CD4-positive, alpha-beta T cell (primary cell): ENCODE measurements at regions of chr12 and their contacts with region 1.

Region 1: GRCh38 chr12:100234598-100235304 is 32.1 kb downstream of the DEPDC4 start:
- DNase-seq: peak in 4 of 14 experiments; percentile 18 to 53 (median 38)
- ATAC-seq: no peak
- H3K4me3 ChIP-seq: no peak overlapping the region
- H3K4me3 Mint-ChIP-seq: no peak overlapping the region
- H3K27ac ChIP-seq: no peak overlapping the region
- H3K27ac Mint-ChIP-seq: no peak overlapping the region
- H3K4me1 ChIP-seq: no peaks in the 10 kb centered on the region
- H3K4me1 Mint-ChIP-seq: no peaks in the 10 kb centered on the region
- H3K27me3 ChIP-seq: no peaks in the 10 kb centered on the region
- H3K27me3 Mint-ChIP-seq: no peaks in the 10 kb centered on the region
- CTCF ChIP-seq: peak; percentile 81

Region 2: DNA sequence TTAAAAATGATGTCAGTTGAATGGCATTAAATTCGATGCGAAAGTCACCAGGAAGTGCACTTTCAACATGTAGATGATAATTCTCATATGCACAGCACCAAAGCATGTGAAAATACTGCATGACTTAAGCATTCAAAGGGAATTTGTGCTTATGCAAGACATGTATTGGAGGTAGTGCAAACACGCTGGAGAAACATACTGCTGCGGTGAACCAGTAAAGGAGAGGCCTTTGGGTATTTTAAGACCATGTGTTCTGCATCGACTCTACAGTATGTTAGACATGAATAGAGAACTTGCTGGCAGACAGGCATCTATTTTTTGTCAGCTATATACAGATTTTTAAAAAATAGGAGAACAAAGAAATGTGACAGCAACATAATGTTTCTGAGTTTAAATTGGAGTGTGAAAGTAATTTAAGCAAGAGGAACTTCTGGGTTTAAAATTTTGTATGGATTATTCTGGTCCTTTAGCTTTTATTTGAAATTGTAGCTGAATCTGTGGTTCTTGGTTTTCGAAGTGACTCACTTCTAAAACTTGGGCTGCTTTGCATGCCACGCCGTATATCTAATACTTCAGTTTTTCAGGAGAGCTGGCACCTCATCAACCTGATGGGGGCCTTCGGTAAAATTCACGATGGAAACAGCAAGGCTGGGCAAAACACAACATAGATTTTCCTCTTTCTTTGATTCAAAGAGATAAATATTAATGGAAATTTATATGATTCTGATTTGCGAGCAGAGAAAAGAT is 1181.0 kb before region 1 on chr12:
- CTCF ChIA-PET with region 1: no interaction called
- POLR2A ChIA-PET with region 1: no interaction called
- intact Hi-C with region 1: no loop called
- DNase-seq: no peak
- ATAC-seq: no peak
- H3K4me3 ChIP-seq: no peak overlapping the region
- H3K4me3 Mint-ChIP-seq: no peak overlapping the region
- H3K27ac ChIP-seq: no peak overlapping the region
- H3K27ac Mint-ChIP-seq: no peak overlapping the region
- H3K4me1 ChIP-seq: no peaks in the 10 kb centered on the region
- H3K4me1 Mint-ChIP-seq: no peaks in the 10 kb centered on the region
- H3K27me3 ChIP-seq: peaks cover 0 to 3% of the 10 kb centered on the region in 2 experiments
- H3K27me3 Mint-ChIP-seq: no peaks in the 10 kb centered on the region
- CTCF ChIP-seq: no peak

Region 3: DNA sequence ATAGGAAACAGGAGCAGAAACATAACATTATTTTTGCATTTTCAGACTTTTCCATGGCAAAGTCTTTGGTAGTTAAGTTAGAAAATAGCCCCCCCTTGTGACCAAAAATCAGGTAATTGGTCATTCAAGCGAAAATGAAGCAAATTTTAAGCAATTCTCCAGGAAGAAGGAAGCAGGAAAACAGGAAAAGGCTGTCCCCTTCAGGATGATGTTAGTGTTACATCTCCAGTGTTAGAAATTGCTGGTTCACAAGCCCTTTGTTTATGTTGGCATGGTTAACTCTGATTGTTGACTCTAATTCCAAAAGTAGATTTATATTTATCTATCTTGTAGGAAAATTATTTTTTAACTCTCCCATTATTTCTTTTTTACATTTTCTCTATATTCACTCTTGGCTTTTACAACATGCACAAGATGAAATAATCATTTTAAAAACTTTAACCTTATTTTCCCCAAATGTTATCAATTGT is 319.9 kb after region 1 on chr12:
- CTCF ChIA-PET with region 1: no interaction called
- POLR2A ChIA-PET with region 1: interaction called, 3 read pairs
- intact Hi-C with region 1: loop called in 1 of 2 experiments (anchors 2 kb)
- DNase-seq: peak in 3 of 14 experiments; percentile 24 to 45 (median 39)
- ATAC-seq: no peak
- H3K4me3 ChIP-seq: no peak overlapping the region
- H3K4me3 Mint-ChIP-seq: no peak overlapping the region
- H3K27ac ChIP-seq: no peak overlapping the region
- H3K27ac Mint-ChIP-seq: no peak overlapping the region
- H3K4me1 ChIP-seq: no peaks in the 10 kb centered on the region
- H3K4me1 Mint-ChIP-seq: no peaks in the 10 kb centered on the region
- H3K27me3 ChIP-seq: no peaks in the 10 kb centered on the region
- H3K27me3 Mint-ChIP-seq: peaks cover 20% of the 10 kb centered on the region
- CTCF ChIP-seq: peak; percentile 53

Region 4: GRCh38 chr12:100672075-100672592 is 437.4 kb after region 1 on chr12:
- CTCF ChIA-PET with region 1: interaction called, 6 read pairs
- POLR2A ChIA-PET with region 1: no interaction called
- intact Hi-C with region 1: loop called (anchors 10 kb)
- DNase-seq: peak in 5 of 14 experiments; percentile 3 to 27 (median 11)
- ATAC-seq: no peak
- H3K4me3 ChIP-seq: no peak overlapping the region
- H3K4me3 Mint-ChIP-seq: no peak overlapping the region
- H3K27ac ChIP-seq: no peak overlapping the region
- H3K27ac Mint-ChIP-seq: no peak overlapping the region
- H3K4me1 ChIP-seq: no peaks in the 10 kb centered on the region
- H3K4me1 Mint-ChIP-seq: no peaks in the 10 kb centered on the region
- H3K27me3 ChIP-seq: peaks cover 0 to 7% of the 10 kb centered on the region in 2 experiments
- H3K27me3 Mint-ChIP-seq: peaks cover 14% of the 10 kb centered on the region
- CTCF ChIP-seq: peak; percentile 29

Region 5: DNA sequence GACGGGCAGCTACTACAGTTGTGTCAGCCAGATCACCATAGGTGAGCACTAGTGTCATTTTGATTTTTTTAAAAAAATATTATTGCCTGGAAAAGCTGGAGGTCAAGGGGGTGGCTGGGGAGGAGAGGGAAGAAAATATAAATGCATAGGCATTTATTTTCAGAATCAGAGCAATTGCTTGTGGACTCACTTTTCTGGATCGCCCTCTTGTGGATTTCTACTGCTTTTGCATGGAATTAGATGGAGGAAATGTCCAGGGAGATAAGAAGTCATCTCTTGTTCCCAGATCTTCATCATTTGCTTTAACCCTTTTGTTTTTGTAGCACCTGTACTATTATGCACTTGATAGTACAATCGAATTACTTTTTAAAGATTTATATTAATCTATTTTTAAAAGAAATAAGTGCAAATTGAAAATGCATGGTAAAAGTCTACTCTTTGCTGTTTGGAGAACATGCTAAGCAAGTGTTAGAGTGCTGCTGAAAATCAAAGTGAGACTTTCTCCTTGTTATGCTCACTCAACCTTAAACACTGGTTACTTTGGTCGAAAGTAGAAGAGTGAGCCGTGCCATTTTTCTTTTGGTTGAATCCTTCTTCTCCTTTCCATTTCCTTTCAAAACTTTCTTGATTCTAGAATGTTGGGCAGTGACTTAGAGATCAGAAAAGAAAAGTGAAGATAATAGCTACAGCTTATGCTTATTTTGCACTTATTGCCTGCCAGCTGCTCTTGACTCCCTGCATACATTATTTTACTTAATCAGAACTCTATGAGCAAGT is 499.3 kb after region 1 on chr12:
- CTCF ChIA-PET with region 1: no interaction called
- POLR2A ChIA-PET with region 1: no interaction called
- intact Hi-C with region 1: loop called (anchors 5 kb)
- DNase-seq: no peak
- ATAC-seq: no peak
- H3K4me3 ChIP-seq: no peak overlapping the region
- H3K4me3 Mint-ChIP-seq: no peak overlapping the region
- H3K27ac ChIP-seq: no peak overlapping the region
- H3K27ac Mint-ChIP-seq: no peak overlapping the region
- H3K4me1 ChIP-seq: no peaks in the 10 kb centered on the region
- H3K4me1 Mint-ChIP-seq: no peaks in the 10 kb centered on the region
- H3K27me3 ChIP-seq: no peaks in the 10 kb centered on the region
- H3K27me3 Mint-ChIP-seq: peaks cover 16% of the 10 kb centered on the region
- CTCF ChIP-seq: no peak

Region 6: DNA sequence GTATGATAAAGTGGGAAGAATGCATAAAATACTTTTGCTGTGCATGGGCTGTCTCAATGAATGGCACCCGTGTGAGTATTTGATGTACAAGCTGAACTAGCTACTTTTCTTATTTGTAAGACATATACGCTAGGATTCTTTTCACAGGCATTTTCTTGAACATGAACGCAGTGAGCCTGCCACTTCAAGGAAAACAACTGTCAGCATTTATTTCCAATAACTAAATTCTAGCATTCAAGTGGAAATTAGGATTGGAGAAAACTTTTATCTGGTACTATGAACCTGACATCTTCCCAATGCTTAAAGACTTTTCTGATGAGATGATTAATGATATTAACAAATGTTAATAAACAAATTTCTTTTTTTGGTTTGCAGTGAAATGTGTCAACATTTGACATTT is 1090.8 kb after region 1 on chr12:
- CTCF ChIA-PET with region 1: interaction called, 6 read pairs
- POLR2A ChIA-PET with region 1: no interaction called
- intact Hi-C with region 1: loop called in 1 of 2 experiments (anchors 2 kb)
- DNase-seq: no peak
- ATAC-seq: no peak
- H3K4me3 ChIP-seq: no peak overlapping the region
- H3K4me3 Mint-ChIP-seq: no peak overlapping the region
- H3K27ac ChIP-seq: no peak overlapping the region
- H3K27ac Mint-ChIP-seq: no peak overlapping the region
- H3K4me1 ChIP-seq: no peaks in the 10 kb centered on the region
- H3K4me1 Mint-ChIP-seq: no peaks in the 10 kb centered on the region
- H3K27me3 ChIP-seq: no peaks in the 10 kb centered on the region
- H3K27me3 Mint-ChIP-seq: no peaks in the 10 kb centered on the region
- CTCF ChIP-seq: no peak